Activated B cell treated with CpG ODN at 0.5 μM for 24 hours (primary cell): ENCODE measurements at regions of chr19 and their contacts with region 1.

Region 1: GRCh38 chr19:17390665-17391370 is 3.2 kb downstream of the CCDC194 start:
- DNase-seq: peak; percentile 85
- ATAC-seq: peak; percentile 100
- H3K4me3 Mint-ChIP-seq: peak overlapping the region; percentile 86
- H3K27ac Mint-ChIP-seq: peak overlapping the region; percentile 24
- H3K4me1 Mint-ChIP-seq: peaks cover 21% of the 10 kb centered on the region
- H3K27me3 Mint-ChIP-seq: no peaks in the 10 kb centered on the region
- CTCF ChIP-seq: no peak

Region 2: DNA sequence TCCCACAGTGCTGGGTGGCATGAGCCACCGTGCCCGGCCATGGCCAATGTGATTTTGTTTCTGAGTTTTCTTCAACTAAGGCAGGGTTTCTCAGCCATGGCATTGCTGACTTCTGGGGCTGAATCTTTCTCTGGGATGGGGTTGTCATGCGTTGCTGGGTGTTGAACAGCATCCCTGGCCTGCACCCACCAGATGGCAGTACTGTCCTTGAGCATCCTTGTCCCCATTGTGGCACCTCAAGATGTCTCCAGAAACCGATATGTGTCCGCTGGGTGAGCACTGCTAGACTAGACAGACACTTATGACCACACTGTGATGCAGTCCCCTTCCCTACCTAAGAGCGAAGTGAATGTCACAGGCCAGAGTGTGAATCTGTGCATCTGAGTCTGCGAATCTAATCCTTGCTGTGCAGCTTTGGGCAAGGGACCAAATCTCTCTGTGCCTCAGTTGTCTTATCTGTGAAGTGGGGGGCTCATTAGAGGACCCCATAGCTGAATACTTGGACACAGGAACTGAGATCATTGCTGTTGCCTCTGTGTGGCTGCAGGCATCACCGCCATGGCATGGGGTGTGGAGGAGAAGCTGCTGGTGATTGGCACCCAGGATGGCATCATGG is 611.9 kb before region 1 on chr19:
- CTCF ChIA-PET with region 1: no interaction called
- POLR2A ChIA-PET with region 1: no interaction called
- intact Hi-C with region 1: loop called (anchors 5 kb)
- DNase-seq: no peak
- ATAC-seq: peak; percentile 61
- H3K4me3 Mint-ChIP-seq: no peak overlapping the region
- H3K27ac Mint-ChIP-seq: no peak overlapping the region
- H3K4me1 Mint-ChIP-seq: no peaks in the 10 kb centered on the region
- H3K27me3 Mint-ChIP-seq: no peaks in the 10 kb centered on the region
- CTCF ChIP-seq: no peak

Region 3: GRCh38 chr19:17260842-17261325 is 129.9 kb before region 1 on chr19:
- CTCF ChIA-PET with region 1: interaction called, 3 read pairs
- POLR2A ChIA-PET with region 1: interaction called, 3 read pairs
- intact Hi-C with region 1: loop called (anchors 1 kb)
- DNase-seq: peak; percentile 83
- ATAC-seq: peak; percentile 100
- H3K4me3 Mint-ChIP-seq: no peak overlapping the region
- H3K27ac Mint-ChIP-seq: no peak overlapping the region
- H3K4me1 Mint-ChIP-seq: peaks cover 11% of the 10 kb centered on the region
- H3K27me3 Mint-ChIP-seq: no peaks in the 10 kb centered on the region
- CTCF ChIP-seq: peak; percentile 74

Region 4: GRCh38 chr19:17292286-17293097 is 98.3 kb before region 1 on chr19:
- CTCF ChIA-PET with region 1: interaction called, 16 read pairs
- POLR2A ChIA-PET with region 1: interaction called, 7 read pairs
- intact Hi-C with region 1: loop called (anchors 1 kb)
- DNase-seq: peak; percentile 90
- ATAC-seq: peak; percentile 91
- H3K4me3 Mint-ChIP-seq: peak overlapping the region; percentile 85
- H3K27ac Mint-ChIP-seq: peak overlapping the region; percentile 53
- H3K4me1 Mint-ChIP-seq: peaks cover 10% of the 10 kb centered on the region
- H3K27me3 Mint-ChIP-seq: peaks cover 2% of the 10 kb centered on the region
- CTCF ChIP-seq: no peak

Region 5: DNA sequence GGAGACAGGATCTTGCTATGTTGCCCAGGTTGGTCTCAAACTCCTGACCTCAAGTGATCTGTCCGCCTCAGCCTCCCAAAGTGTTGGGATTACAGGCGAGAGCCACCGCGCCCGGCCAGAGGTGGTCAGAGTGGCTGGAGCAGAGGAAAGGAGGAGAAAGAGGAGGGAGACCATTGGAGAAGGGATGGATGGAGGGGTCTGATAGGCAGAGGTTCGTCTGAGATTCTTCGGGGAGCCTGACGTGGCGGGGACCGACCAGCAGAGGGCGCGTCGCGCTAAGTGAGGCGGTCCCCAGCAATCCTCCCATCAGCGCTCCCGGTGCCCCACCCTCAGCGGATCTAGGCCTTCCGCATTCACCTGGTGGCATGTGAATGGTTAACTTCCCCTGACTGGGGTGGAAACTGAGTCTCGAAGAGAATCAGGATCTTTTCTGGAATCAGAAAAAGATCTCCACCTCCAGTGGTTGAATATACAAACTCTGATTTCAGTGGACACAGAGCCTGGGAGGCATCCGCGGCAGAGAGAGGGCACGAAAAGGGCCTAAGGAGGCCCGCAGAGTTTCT is 44.6 kb before region 1 on chr19:
- CTCF ChIA-PET with region 1: interaction called, 22 read pairs
- POLR2A ChIA-PET with region 1: interaction called, 4 read pairs
- intact Hi-C with region 1: loop called (anchors 1 kb)
- DNase-seq: peak; percentile 79
- ATAC-seq: peak; percentile 98
- H3K4me3 Mint-ChIP-seq: no peak overlapping the region
- H3K27ac Mint-ChIP-seq: no peak overlapping the region
- H3K4me1 Mint-ChIP-seq: peaks cover 6% of the 10 kb centered on the region
- H3K27me3 Mint-ChIP-seq: peaks cover 15% of the 10 kb centered on the region
- CTCF ChIP-seq: peak; percentile 84

Region 6: DNA sequence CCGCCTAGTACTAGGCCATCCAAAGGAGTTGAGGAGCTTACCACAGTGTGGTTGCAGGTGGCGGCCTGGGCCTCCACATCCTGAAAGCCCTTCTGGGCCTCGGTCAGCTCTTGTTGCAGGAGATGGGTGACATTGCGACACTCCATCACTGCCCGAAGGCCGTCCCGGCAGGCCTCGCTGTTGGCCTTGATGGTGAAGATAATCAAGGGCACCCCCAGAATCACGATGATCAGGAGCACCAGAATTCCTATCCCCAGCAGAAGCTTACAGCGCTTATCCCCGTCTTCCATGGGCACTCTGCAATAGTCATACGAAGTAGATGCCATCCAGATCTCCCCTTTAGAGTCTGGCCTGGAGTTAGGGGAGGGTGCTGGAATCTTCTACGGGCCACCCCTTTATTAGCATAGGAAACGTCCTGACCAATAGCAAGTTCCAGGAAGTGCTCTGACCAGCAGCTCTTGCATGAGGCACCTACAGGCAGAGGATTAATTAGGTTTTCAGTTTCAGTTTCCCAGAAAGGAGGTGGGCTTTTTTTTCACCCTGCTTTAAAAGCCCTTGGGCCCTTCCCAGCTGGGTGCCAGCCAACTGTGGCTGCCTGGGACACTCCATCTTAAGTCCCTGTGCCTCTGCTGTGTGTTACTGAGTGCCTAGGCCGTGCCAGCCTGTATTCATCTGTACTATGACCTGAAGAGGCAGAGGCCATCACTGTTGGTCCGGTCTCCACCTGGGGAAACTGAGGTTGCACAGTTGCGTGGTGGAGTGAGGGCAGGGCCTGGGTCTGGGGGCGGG is 14.6 kb after region 1 on chr19 and contains the start of gene BST2:
- CTCF ChIA-PET with region 1: no interaction called
- POLR2A ChIA-PET with region 1: interaction called, 5 read pairs
- intact Hi-C with region 1: loop called (anchors 1 kb)
- DNase-seq: peak; percentile 42
- ATAC-seq: peak; percentile 86
- H3K4me3 Mint-ChIP-seq: peak within 1 kb of the TSS; percentile 92
- H3K27ac Mint-ChIP-seq: peak within 1 kb of the TSS; percentile 93
- H3K4me1 Mint-ChIP-seq: peaks cover 49% of the 10 kb centered on the region
- H3K27me3 Mint-ChIP-seq: no peaks in the 10 kb centered on the region
- CTCF ChIP-seq: no peak
- total RNA-seq, gene BST2: 120 and 121 TPM in 2 replicates

Region 7: GRCh38 chr19:17419621-17420466 is 29.0 kb after region 1 on chr19 and contains the start of gene MVB12A:
- CTCF ChIA-PET with region 1: interaction called, 3 read pairs
- POLR2A ChIA-PET with region 1: interaction called, 5 read pairs
- intact Hi-C with region 1: loop called (anchors 1 kb)
- DNase-seq: peak; percentile 91
- ATAC-seq: peak; percentile 97
- H3K4me3 Mint-ChIP-seq: peak within 1 kb of the TSS; percentile 95
- H3K27ac Mint-ChIP-seq: peak within 1 kb of the TSS; percentile 93
- H3K4me1 Mint-ChIP-seq: peaks cover 16% of the 10 kb centered on the region
- H3K27me3 Mint-ChIP-seq: no peaks in the 10 kb centered on the region
- CTCF ChIP-seq: no peak
- total RNA-seq, gene MVB12A: 22.8 and 23.3 TPM in 2 replicates